Esophagus muscularis mucosa (tissue), 4 donors: ENCODE measurements at regions of chr6 and their contacts with region 1.

Region 1: GRCh38 chr6:41591859-41592502 is 45.8 kb downstream of the FOXP4 start:
- DNase-seq: peak; percentile 95
- H3K4me3 ChIP-seq: no peak overlapping the region
- H3K27ac ChIP-seq: no peak overlapping the region
- H3K4me1 ChIP-seq: no peaks in the 10 kb centered on the region
- H3K27me3 ChIP-seq: no peaks in the 10 kb centered on the region
- CTCF ChIP-seq: peak; percentile 90 to 95 (median 93)
- EP300 ChIP-seq: no peak
- POLR2A ChIP-seq: no peak

Region 2: GRCh38 chr6:41367700-41368099 is 224.3 kb before region 1 on chr6:
- intact Hi-C with region 1: loop called (anchors 1 kb)
- DNase-seq: no peak
- H3K4me3 ChIP-seq: no peak overlapping the region
- H3K27ac ChIP-seq: no peak overlapping the region
- H3K4me1 ChIP-seq: peaks cover 9 to 26% (median 23%) of the 10 kb centered on the region in 4 donors
- H3K27me3 ChIP-seq: peaks cover 0 to 80% (median 7%) of the 10 kb centered on the region in 4 donors
- CTCF ChIP-seq: peak; percentile 29 to 41 (median 39)
- EP300 ChIP-seq: no peak
- POLR2A ChIP-seq: no peak

Region 3: DNA sequence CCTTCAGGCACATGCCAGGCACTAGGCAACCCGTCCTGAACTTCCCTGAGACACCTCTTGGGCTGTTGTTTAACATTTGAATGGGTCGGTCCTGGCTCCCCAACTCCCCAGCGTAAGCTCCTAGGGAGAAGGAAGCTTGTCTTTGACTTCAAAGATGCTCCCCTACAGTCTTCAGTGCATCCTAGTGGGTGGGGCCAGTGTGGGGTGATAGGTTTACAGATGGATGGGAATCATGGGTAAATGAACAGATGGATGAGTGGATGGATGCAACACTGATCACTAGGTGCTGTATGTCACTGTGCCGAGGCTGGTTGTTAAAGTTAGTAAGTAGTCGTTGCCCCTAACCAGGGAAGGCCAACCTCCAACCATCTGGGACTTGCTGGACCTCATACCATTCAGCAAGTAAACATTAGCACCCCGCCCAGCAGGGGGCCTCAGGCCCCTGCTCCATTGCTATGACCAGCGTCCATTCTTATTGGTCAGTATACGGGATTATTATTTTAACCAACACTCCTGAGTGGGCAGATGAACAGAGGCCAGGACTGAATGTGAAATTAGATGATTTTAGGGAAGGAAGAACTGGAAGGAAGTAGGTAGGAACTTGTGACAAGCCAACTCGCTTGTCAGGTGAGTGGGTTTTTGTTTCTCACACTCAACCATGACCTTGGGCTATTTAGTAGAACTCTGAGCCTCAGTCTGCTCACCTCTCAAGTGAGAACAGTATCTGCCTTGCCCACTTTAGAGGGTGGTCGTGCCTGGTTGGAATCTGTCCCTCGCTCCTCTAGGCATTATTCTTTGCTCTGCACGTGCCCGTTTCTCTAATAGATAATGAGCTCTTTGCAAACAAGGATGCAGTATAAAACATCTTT is 128.7 kb before region 1 on chr6:
- intact Hi-C with region 1: loop called (anchors 2 kb)
- DNase-seq: no peak
- H3K4me3 ChIP-seq: no peak overlapping the region
- H3K27ac ChIP-seq: no peak overlapping the region
- H3K4me1 ChIP-seq: no peaks in the 10 kb centered on the region
- H3K27me3 ChIP-seq: peaks cover 0 to 31% (median 0%) of the 10 kb centered on the region in 4 donors
- CTCF ChIP-seq: peak; percentile 50 to 60 (median 57)
- EP300 ChIP-seq: no peak
- POLR2A ChIP-seq: no peak

Region 4: GRCh38 chr6:41733707-41734665 is 142.0 kb after region 1 on chr6:
- intact Hi-C with region 1: no loop called
- DNase-seq: no peak
- H3K4me3 ChIP-seq: peak overlapping the region; percentile 90 to 98 (median 97)
- H3K27ac ChIP-seq: peak overlapping the region; percentile 97 to 99 (median 98)
- H3K4me1 ChIP-seq: peaks cover 52 to 59% (median 57%) of the 10 kb centered on the region in 4 donors
- H3K27me3 ChIP-seq: no peaks in the 10 kb centered on the region
- CTCF ChIP-seq: peak in 1 of 3 experiments; percentile 6
- EP300 ChIP-seq: no peak
- POLR2A ChIP-seq: peak; percentile 37